ENCODE measurements at regions of chr1 and their contacts with region 1.

Region 1: GRCh38 chr1:197356723-197357533 is 88.9 kb downstream of the CRB1 start:
- DNase-seq: no peak
- H3K4me3 ChIP-seq: no peak overlapping the region
- H3K27ac ChIP-seq: no peak overlapping the region
- H3K4me1 ChIP-seq: no peaks in the 10 kb centered on the region
- H3K27me3 ChIP-seq: no peaks in the 10 kb centered on the region
- CTCF ChIP-seq: peak in 2 of 4 experiments; percentile 32 to 46
- EP300 ChIP-seq: no peak
- POLR2A ChIP-seq: no peak

Region 2: GRCh38 chr1:197178998-197179397 is 177.9 kb before region 1 on chr1:
- intact Hi-C with region 1: loop called (anchors 10 kb)
- DNase-seq: no peak
- H3K4me3 ChIP-seq: no peak overlapping the region
- H3K27ac ChIP-seq: no peak overlapping the region
- H3K4me1 ChIP-seq: peaks cover 0 to 12% (median 4%) of the 10 kb centered on the region in 4 donors
- H3K27me3 ChIP-seq: no peaks in the 10 kb centered on the region
- CTCF ChIP-seq: no peak
- EP300 ChIP-seq: no peak
- POLR2A ChIP-seq: peak in 1 of 2 donors; percentile 10

Measured in sigmoid colon (tissue), 7 donors.